Dendritic cell treated with granulocyte-macrophage colony-stimulating factor and Interleukin-4, amounts not matched to agents 40 ng/mL and 50 ng/mL, for 4 days (primary cell): ENCODE measurements at regions of chr9 and their contacts with region 1.

Region 1: DNA sequence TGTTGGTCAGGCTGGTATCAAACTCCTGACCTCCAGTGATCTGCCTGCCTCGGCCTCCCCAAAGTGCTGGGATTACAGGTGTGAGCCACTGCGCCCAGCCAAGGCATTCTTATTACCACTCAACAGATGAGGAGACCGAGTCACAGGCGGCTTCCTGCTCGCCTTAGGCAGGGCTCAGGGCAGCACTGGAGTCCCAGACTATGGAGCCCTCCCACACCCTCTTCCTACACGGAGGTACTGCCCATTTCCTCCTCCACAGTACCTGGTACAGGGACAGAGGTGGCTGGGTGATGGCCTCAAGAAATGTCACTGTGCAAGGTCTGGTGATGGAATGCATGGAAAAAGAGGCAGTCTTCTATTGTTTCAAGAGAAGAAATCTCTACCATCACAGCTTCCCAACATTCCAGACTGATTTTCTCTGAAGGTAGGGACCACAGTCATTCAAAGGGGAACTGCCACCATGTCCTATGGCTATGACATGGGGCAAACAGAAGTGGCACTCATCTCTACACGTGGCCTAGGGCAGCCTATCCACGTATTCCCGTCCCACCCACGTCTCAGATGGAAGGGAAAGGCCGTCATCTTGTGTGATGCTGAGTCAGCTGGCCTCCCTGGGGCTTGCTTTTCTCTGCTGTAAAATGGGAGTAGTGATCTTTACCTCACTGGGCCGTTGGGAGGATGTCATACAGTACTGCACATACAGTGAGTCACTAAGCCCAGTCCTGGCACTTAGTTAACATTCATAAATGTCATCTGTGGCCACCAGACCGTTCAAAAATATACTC is 72.5 kb downstream of the RAPGEF1 start:
- H3K4me3 Mint-ChIP-seq: no peak overlapping the region
- H3K27ac Mint-ChIP-seq: peak overlapping the region; percentile 87
- H3K4me1 Mint-ChIP-seq: peaks cover 95% of the 10 kb centered on the region
- H3K27me3 Mint-ChIP-seq: no peaks in the 10 kb centered on the region

Region 2: DNA sequence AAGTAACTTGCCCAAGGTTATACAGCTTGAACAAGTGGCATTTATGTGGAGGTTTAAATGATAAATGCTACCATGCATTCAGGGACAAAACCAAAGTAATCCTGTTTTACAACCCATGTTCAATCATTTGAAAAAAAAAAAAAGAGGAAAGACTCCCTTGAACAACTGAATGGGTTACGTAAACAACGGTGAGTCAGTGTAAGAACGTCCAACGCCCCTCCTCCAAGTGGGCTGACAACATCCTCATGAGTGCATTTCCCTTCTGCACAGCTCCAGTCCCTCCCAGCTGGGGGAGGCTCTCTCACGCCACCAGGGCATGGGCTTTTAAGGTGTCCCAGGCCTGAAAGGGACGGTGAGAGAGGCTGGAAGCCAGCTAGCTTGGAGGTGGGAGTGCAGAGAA is 32.1 kb before region 1 on chr9:
- intact Hi-C with region 1: loop called (anchors 1 kb)
- H3K4me3 Mint-ChIP-seq: peak overlapping the region; percentile 42
- H3K27ac Mint-ChIP-seq: peak overlapping the region; percentile 82
- H3K4me1 Mint-ChIP-seq: peaks cover 87% of the 10 kb centered on the region
- H3K27me3 Mint-ChIP-seq: no peaks in the 10 kb centered on the region

Region 3: DNA sequence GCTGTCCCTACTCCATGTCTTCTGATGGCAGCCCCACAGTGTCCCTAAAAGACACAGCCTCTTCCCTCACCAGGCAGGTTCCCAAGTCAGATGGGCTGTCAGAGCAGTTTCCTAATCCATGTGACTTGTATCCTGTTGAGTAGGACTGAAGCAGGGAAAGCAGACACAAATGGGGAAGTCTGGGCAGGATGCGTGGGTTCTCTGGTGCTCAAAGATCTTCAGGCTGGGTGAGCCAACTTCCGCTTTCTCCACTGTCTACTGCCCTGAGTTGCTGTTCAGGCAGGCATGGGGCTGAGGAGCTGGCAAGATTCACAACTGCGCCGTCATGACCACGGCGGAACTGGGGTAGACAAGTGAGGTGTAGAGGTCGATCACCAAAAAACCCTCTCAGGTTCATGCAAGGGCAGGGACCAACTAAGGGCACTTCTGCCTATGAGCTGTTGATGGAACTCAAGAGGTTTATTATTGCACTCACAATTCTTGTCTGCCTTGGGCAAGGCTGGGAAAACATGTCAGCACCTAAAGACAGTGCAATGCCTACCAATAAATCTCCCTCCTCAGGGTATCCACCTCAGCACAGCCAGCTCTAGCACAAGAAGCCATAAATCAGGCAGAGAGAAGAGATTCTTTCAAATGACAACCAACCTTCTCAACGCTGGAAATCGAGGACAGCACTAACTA is 10.9 kb before region 1 on chr9:
- intact Hi-C with region 1: loop called (anchors 2 kb)
- H3K4me3 Mint-ChIP-seq: peak overlapping the region; percentile 38
- H3K27ac Mint-ChIP-seq: peak overlapping the region; percentile 84
- H3K4me1 Mint-ChIP-seq: peaks cover 69% of the 10 kb centered on the region
- H3K27me3 Mint-ChIP-seq: no peaks in the 10 kb centered on the region